ENCODE measurements at regions of chr15 and their contacts with region 1.

Region 1: GRCh38 chr15:74382004-74382816 is 14.8 kb upstream of the CYP11A1 start:
- DNase-seq: peak; percentile 85
- ATAC-seq: no peak
- H3K4me3 Mint-ChIP-seq: no peak overlapping the region
- H3K27ac Mint-ChIP-seq: peak overlapping the region; percentile 96
- H3K4me1 Mint-ChIP-seq: peaks cover 86% of the 10 kb centered on the region
- H3K27me3 Mint-ChIP-seq: no peaks in the 10 kb centered on the region
- CTCF ChIP-seq: peak; percentile 99

Region 2: DNA sequence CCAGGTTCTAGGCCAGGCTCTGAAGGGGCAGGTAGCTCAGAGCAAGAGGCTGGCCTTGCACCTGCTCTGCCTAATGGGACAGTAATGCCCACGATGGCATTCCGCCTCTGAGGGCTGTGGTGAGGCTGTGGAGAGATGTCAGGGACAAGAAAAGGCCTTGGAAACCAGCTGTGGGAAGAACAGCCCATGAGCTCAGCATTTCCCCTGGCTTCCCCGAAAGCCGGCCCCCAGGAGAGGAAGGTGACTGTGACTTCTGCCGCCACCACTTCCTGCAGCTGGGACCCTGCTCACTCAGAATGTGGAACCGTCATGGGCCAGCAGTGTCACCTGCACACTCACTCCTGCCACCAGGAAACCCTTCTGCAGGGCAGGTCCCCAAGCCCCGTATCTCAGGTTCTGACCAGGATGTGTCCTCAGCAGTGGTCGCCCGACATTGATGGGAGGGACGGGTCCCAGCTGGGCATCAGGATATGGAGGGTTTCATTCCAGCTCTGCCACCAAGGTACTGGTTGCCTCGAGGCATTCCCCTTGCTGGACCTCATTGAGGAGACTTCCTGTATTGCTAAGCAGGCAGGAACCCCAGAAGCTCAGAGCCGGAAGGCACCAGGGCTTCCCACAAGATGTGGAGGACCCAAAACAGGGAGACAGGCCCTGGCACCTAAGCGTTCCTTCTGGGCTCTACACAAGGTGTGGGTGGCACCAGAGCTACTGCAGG is 20.8 kb after region 1 on chr15:
- CTCF ChIA-PET with region 1: interaction called, 35 read pairs
- POLR2A ChIA-PET with region 1: interaction called, 141 read pairs
- intact Hi-C with region 1: loop called (anchors 2 kb)
- DNase-seq: peak; percentile 96
- ATAC-seq: peak; percentile 67
- H3K4me3 Mint-ChIP-seq: peak overlapping the region; percentile 63
- H3K27ac Mint-ChIP-seq: peak overlapping the region; percentile 84
- H3K4me1 Mint-ChIP-seq: peaks cover 82% of the 10 kb centered on the region
- H3K27me3 Mint-ChIP-seq: no peaks in the 10 kb centered on the region
- CTCF ChIP-seq: no peak

Region 3: DNA sequence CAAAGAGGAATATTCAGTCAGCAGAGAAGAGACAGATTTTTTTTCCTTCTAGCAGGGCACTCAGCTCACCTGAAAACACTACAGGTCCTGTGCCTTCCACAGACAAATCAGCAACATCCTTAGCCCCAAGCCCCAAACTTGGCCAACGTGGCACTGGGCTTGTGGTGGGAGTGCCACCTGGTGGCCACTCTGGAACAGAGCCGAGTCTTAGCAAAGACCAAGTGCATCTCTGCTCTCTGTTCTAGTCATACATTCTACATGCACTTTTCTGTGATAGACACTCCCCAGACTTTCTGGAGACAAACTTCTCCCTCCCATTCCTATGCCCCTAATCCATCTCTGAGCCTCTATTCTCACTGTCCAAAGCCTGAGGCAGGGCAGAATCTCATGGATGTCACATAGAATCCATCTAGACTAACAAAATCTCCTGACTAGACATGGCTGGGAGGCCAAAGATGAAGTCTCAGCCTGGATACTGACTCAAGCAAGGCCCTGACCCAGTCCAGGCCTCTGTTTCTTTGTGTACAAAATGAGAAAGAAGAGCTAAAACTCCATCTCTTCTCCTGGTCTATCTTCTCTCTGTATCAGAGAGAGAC is 56.6 kb after region 1 on chr15:
- CTCF ChIA-PET with region 1: interaction called, 840 read pairs
- POLR2A ChIA-PET with region 1: interaction called, 14 read pairs
- intact Hi-C with region 1: loop called (anchors 1 kb)
- DNase-seq: peak; percentile 88
- ATAC-seq: peak; percentile 78
- H3K4me3 Mint-ChIP-seq: no peak overlapping the region
- H3K27ac Mint-ChIP-seq: no peak overlapping the region
- H3K4me1 Mint-ChIP-seq: peaks cover 32% of the 10 kb centered on the region
- H3K27me3 Mint-ChIP-seq: no peaks in the 10 kb centered on the region
- CTCF ChIP-seq: peak; percentile 87

Region 4: GRCh38 chr15:74489518-74490338 is 107.5 kb after region 1 on chr15:
- CTCF ChIA-PET with region 1: interaction called, 11 read pairs
- POLR2A ChIA-PET with region 1: interaction called, 3 read pairs
- intact Hi-C with region 1: no loop called
- DNase-seq: peak; percentile 90
- ATAC-seq: peak; percentile 97
- H3K4me3 Mint-ChIP-seq: peak overlapping the region; percentile 71
- H3K27ac Mint-ChIP-seq: peak overlapping the region; percentile 93
- H3K4me1 Mint-ChIP-seq: peaks cover 18% of the 10 kb centered on the region
- H3K27me3 Mint-ChIP-seq: no peaks in the 10 kb centered on the region
- CTCF ChIP-seq: peak; percentile 77

Measured in activated CD8-positive, alpha-beta T cell treated with anti-CD3 and anti-CD28 coated beads for 36 hours (primary cell).